ENCODE measurements at regions of chrX and their contacts with region 1.

Region 1: DNA sequence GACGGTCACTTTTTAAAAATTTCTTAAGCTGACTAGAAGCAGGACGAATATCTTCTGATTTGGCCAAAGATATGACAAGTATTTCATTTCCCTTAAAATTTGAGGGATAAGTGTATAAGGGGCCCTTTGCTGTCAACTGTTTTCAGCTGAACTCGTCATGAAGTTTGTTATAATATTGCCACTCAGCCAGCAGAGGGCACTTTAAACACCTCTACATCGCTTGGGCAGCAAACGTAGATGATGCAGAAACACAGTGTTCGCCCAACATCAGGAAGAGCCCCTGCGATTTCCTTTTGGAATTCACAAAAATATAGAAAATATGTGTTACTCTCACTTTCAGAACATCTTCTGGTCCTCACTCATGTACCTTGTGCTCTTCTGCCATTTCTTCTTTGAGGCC is 435.7 kb upstream of the FMR1 start:
- DNase-seq: no peak
- ATAC-seq: peak; percentile 63
- H3K4me3 ChIP-seq: no peak overlapping the region
- H3K27ac ChIP-seq: no peak overlapping the region
- H3K4me1 ChIP-seq: no peaks in the 10 kb centered on the region
- H3K27me3 ChIP-seq: no peaks in the 10 kb centered on the region
- CTCF ChIP-seq: peak; percentile 34 to 41 (median 34); a peak in 4 of 6 replicates
- EP300 ChIP-seq: no peak
- POLR2A ChIP-seq: no peak
- RAD21 ChIP-seq: peak; percentile 45

Region 2: DNA sequence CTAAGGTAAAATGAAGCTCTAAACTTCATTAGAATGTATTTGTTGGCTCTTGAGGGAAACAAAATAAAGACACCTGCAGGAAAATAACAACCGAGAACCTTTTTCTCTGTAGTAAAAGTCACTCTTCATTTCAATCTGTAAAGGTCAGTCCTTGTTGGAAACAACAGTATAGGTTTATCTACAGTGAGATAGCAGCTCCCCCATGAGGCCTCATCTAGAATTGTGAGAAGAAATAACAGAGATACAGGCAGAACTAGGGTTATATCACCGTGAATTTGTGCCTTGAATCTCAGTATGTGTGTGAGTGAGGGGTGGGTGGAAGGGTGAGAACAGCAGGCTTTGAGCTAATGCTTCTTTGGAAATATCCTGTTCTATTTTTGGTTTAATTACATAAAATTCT is 327.9 kb after region 1 on chrX:
- CTCF ChIA-PET with region 1: interaction called, 12 read pairs
- POLR2A ChIA-PET with region 1: no interaction called
- RAD21 ChIA-PET with region 1: interaction called, 5 read pairs
- SMC1A ChIA-PET with region 1: interaction called, 3 read pairs
- in situ Hi-C with region 1: no loop called
- intact Hi-C with region 1: loop called (anchors 10 kb)
- DNase-seq: no peak
- ATAC-seq: peak; percentile 78
- H3K4me3 ChIP-seq: no peak overlapping the region
- H3K27ac ChIP-seq: no peak overlapping the region
- H3K4me1 ChIP-seq: no peaks in the 10 kb centered on the region
- H3K27me3 ChIP-seq: no peaks in the 10 kb centered on the region
- CTCF ChIP-seq: peak; percentile 40 to 50 (median 41); a peak in 5 of 6 replicates
- EP300 ChIP-seq: no peak
- POLR2A ChIP-seq: no peak
- RAD21 ChIP-seq: peak; percentile 72

Region 3: DNA sequence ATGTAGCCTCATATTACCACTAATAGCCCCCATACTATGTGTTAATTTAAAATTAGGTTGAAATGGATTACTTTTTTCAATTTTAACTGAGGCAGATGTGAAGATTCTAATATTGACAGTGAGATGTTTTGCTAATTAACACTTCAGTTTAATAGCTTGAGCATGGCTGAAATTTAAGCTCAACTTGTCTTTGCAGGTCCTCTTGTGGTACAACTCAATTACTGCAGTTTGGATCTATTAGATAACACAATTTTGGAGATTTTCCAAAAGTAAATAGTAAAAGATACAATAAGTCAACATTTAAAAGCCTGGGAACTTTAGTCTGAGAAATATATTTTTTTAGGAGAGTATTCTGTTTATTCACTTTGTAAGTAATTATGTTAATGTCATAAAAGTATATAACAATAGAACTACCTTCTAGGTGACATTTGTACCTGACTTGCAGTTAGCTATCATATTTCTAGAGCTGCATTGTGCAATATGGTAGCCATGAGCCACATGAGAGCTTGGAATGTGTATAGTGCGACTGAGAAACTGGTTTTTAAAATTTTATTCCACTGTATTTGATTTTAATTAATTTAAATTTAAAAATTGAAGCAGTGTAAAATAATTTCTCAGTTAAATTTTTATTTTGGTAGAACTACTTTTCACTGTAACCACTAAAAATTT is 362.6 kb after region 1 on chrX:
- CTCF ChIA-PET with region 1: interaction called, 12 read pairs
- POLR2A ChIA-PET with region 1: no interaction called
- RAD21 ChIA-PET with region 1: interaction called, 4 read pairs
- SMC1A ChIA-PET with region 1: interaction called, 4 read pairs
- in situ Hi-C with region 1: no loop called
- intact Hi-C with region 1: loop called (anchors 10 kb)
- DNase-seq: no peak
- ATAC-seq: no peak
- H3K4me3 ChIP-seq: no peak overlapping the region
- H3K27ac ChIP-seq: no peak overlapping the region
- H3K4me1 ChIP-seq: no peaks in the 10 kb centered on the region
- H3K27me3 ChIP-seq: no peaks in the 10 kb centered on the region
- CTCF ChIP-seq: peak; percentile 38 to 43 (median 38); a peak in 4 of 6 replicates
- EP300 ChIP-seq: no peak
- POLR2A ChIP-seq: no peak
- RAD21 ChIP-seq: peak; percentile 56

Region 4: GRCh38 chrX:148947515-148947914 is 1471.5 kb after region 1 on chrX:
- CTCF ChIA-PET with region 1: no interaction called
- POLR2A ChIA-PET with region 1: no interaction called
- RAD21 ChIA-PET with region 1: no interaction called
- SMC1A ChIA-PET with region 1: no interaction called
- in situ Hi-C with region 1: no loop called
- intact Hi-C with region 1: no loop called
- DNase-seq: no peak
- ATAC-seq: no peak
- H3K4me3 ChIP-seq: no peak overlapping the region
- H3K27ac ChIP-seq: no peak overlapping the region
- H3K4me1 ChIP-seq: no peaks in the 10 kb centered on the region
- H3K27me3 ChIP-seq: no peaks in the 10 kb centered on the region
- CTCF ChIP-seq: no peak
- EP300 ChIP-seq: no peak
- POLR2A ChIP-seq: no peak
- RAD21 ChIP-seq: no peak

Measured in GM12878 (cell line).